ENCODE measurements at regions of chr6 and their contacts with region 1.

Region 1: GRCh38 chr6:36027501-36028087 is at the start of gene MAPK14:
- DNase-seq: peak; percentile 100
- H3K4me3 Mint-ChIP-seq: peak within 1 kb of the TSS; percentile 93
- H3K27ac Mint-ChIP-seq: peak within 1 kb of the TSS; percentile 93
- H3K4me1 Mint-ChIP-seq: peaks cover 33% of the 10 kb centered on the region
- H3K27me3 Mint-ChIP-seq: peaks cover 19% of the 10 kb centered on the region
- total RNA-seq, gene MAPK14: 39.9 to 40.3 TPM

Region 2: GRCh38 chr6:35984701-35985100 is 42.9 kb before region 1 on chr6:
- CTCF ChIA-PET with region 1: no interaction called
- intact Hi-C with region 1: no loop called
- DNase-seq: no peak
- H3K4me3 Mint-ChIP-seq: no peak overlapping the region
- H3K27ac Mint-ChIP-seq: no peak overlapping the region
- H3K4me1 Mint-ChIP-seq: no peaks in the 10 kb centered on the region
- H3K27me3 Mint-ChIP-seq: no peaks in the 10 kb centered on the region

Region 3: DNA sequence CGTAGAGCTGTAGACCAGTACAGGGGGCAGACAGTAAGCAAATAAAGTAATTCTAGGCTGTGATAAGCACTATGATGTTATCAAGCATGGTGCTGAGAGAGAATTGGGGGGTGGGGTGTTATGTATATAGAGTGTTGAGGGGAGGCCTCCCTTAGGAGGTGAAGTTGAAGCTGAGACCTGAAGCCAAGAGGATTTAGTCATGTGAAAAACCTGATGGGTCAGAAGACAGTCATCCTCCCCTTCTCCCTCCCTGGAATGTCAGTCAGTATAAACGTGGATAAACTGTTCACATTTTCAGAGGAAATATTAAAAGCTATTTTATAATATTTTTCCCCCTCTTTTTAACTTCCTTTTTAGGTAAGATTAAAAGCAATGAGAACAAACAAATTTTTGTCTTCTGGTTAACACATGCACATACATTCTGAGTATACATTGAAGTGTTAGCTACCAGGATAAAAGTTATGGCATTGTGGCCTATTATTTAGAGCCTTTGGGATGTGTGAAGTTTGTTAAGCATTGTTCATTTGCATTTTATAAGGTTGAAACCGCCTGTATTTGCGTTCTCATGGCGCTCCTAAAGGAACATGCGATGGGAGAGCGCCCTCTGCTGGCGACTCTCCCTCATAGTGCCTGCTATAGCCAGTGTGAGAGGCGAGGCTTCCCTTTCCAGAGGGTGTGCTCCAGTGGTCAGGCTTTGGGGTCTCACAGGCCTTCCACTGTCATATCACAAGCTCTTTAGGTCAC is 67.3 kb after region 1 on chr6:
- CTCF ChIA-PET with region 1: interaction called, 135 read pairs
- intact Hi-C with region 1: loop called (anchors 1 kb)
- DNase-seq: peak; percentile 90
- H3K4me3 Mint-ChIP-seq: no peak overlapping the region
- H3K27ac Mint-ChIP-seq: peak overlapping the region; percentile 42
- H3K4me1 Mint-ChIP-seq: peaks cover 29% of the 10 kb centered on the region
- H3K27me3 Mint-ChIP-seq: no peaks in the 10 kb centered on the region

Region 4: GRCh38 chr6:36196880-36197548 is 169.4 kb after region 1 on chr6:
- CTCF ChIA-PET with region 1: interaction called, 4 read pairs
- intact Hi-C with region 1: loop called (anchors 1 kb)
- DNase-seq: peak; percentile 100
- H3K4me3 Mint-ChIP-seq: peak overlapping the region; percentile 89
- H3K27ac Mint-ChIP-seq: peak overlapping the region; percentile 93
- H3K4me1 Mint-ChIP-seq: peaks cover 43% of the 10 kb centered on the region
- H3K27me3 Mint-ChIP-seq: no peaks in the 10 kb centered on the region

Region 5: GRCh38 chr6:36360241-36361054 is 332.9 kb after region 1 on chr6:
- CTCF ChIA-PET with region 1: interaction called, 6 read pairs
- intact Hi-C with region 1: loop called (anchors 1 kb)
- DNase-seq: peak; percentile 83
- H3K4me3 Mint-ChIP-seq: no peak overlapping the region
- H3K27ac Mint-ChIP-seq: no peak overlapping the region
- H3K4me1 Mint-ChIP-seq: peaks cover 9% of the 10 kb centered on the region
- H3K27me3 Mint-ChIP-seq: no peaks in the 10 kb centered on the region

Region 6: GRCh38 chr6:36546920-36547645 is 519.5 kb after region 1 on chr6 and contains the start of gene STK38:
- CTCF ChIA-PET with region 1: no interaction called
- intact Hi-C with region 1: loop called (anchors 2 kb)
- DNase-seq: peak; percentile 95
- H3K4me3 Mint-ChIP-seq: peak within 1 kb of the TSS; percentile 97
- H3K27ac Mint-ChIP-seq: peak within 1 kb of the TSS; percentile 97
- H3K4me1 Mint-ChIP-seq: peaks cover 39% of the 10 kb centered on the region
- H3K27me3 Mint-ChIP-seq: no peaks in the 10 kb centered on the region
- total RNA-seq, gene STK38: 23.6 to 24.4 TPM